CD8-positive, alpha-beta memory T cell (primary cell): ENCODE measurements at regions of chr3 and their contacts with region 1.

Region 1: GRCh38 chr3:187164885-187165543 is 25.7 kb upstream of the RPL39L start:
- DNase-seq: peak in 4 of 5 donors; percentile 18 to 66 (median 52)
- H3K4me3 ChIP-seq: no peak overlapping the region
- H3K4me3 Mint-ChIP-seq: no peak overlapping the region
- H3K27ac ChIP-seq: no peak overlapping the region
- H3K27ac Mint-ChIP-seq: peak overlapping the region in 1 of 8 donors; percentile 77
- H3K4me1 ChIP-seq: peaks cover 3% of the 10 kb centered on the region
- H3K4me1 Mint-ChIP-seq: peaks cover 2 to 3% (median 3%) of the 10 kb centered on the region in 3 donors
- H3K27me3 ChIP-seq: no peaks in the 10 kb centered on the region
- H3K27me3 Mint-ChIP-seq: peaks cover 8 to 13% of the 10 kb centered on the region in 2 donors

Region 2: GRCh38 chr3:187101184-187102072 is 63.6 kb before region 1 on chr3:
- CTCF ChIA-PET with region 1: interaction called, 11 read pairs
- POLR2A ChIA-PET with region 1: no interaction called
- DNase-seq: peak; percentile 27 to 68 (median 40)
- H3K4me3 ChIP-seq: peak overlapping the region; percentile 43
- H3K4me3 Mint-ChIP-seq: peak overlapping the region; percentile 17 to 86 (median 74)
- H3K27ac ChIP-seq: no peak overlapping the region
- H3K27ac Mint-ChIP-seq: peak overlapping the region; percentile 11 to 89 (median 56)
- H3K4me1 ChIP-seq: peaks cover 18% of the 10 kb centered on the region
- H3K4me1 Mint-ChIP-seq: peaks cover 17 to 40% (median 27%) of the 10 kb centered on the region in 3 donors
- H3K27me3 ChIP-seq: no peaks in the 10 kb centered on the region
- H3K27me3 Mint-ChIP-seq: no peaks in the 10 kb centered on the region

Region 3: DNA sequence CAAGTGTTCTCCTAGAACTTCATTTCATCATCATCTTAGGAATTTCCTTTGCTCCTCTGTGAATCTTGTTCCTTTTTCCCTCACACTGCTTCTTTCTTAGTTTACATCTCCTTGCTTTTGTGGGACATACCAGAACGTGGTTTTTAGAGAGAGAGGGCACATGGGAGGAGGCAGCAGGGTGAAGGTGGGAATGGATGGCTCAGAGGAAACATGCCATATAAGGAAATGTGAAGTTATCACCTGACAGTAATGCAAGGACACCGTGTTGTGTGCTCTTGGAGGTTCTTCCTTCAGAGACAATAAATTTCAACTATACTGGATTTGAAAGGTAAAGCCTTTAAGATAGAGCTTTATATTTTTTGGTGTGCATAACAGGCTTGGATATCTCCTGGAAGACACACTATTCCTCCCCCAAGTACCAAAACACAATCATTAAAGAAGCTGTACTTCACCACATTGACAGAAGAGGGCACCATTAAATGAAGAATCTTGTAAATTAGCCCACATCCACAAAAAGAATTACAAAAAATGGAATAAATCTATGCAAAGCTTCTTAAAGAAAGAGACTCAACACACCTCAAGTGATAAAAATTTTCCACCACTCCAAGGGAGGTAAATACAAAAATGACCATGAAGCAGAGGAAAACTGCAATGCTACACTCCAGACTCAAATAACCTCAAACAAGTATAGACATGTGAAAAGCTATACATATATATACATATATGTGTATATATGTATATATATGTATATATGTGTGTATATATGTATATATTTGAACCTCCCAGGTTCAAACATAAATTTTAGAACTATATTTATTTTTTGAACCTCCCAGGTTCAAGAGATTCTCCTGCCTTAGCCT is 51.9 kb before region 1 on chr3:
- CTCF ChIA-PET with region 1: interaction called, 121 read pairs
- POLR2A ChIA-PET with region 1: no interaction called
- DNase-seq: peak in 2 of 5 donors; percentile 24 to 47
- H3K4me3 ChIP-seq: no peak overlapping the region
- H3K4me3 Mint-ChIP-seq: no peak overlapping the region
- H3K27ac ChIP-seq: no peak overlapping the region
- H3K27ac Mint-ChIP-seq: no peak overlapping the region
- H3K4me1 ChIP-seq: no peaks in the 10 kb centered on the region
- H3K4me1 Mint-ChIP-seq: peaks cover 3 to 8% (median 7%) of the 10 kb centered on the region in 3 donors
- H3K27me3 ChIP-seq: no peaks in the 10 kb centered on the region
- H3K27me3 Mint-ChIP-seq: peaks cover 0 to 4% of the 10 kb centered on the region in 2 donors

Region 4: GRCh38 chr3:187125319-187126031 is 39.5 kb before region 1 on chr3:
- CTCF ChIA-PET with region 1: interaction called, 11 read pairs
- POLR2A ChIA-PET with region 1: no interaction called
- DNase-seq: no peak
- H3K4me3 ChIP-seq: no peak overlapping the region
- H3K4me3 Mint-ChIP-seq: peak overlapping the region in 1 of 7 donors; percentile 65
- H3K27ac ChIP-seq: no peak overlapping the region
- H3K27ac Mint-ChIP-seq: no peak overlapping the region
- H3K4me1 ChIP-seq: peaks cover 13% of the 10 kb centered on the region
- H3K4me1 Mint-ChIP-seq: peaks cover 12 to 21% (median 12%) of the 10 kb centered on the region in 3 donors
- H3K27me3 ChIP-seq: no peaks in the 10 kb centered on the region
- H3K27me3 Mint-ChIP-seq: no peaks in the 10 kb centered on the region

Region 5: GRCh38 chr3:187150599-187150998 is 14.4 kb before region 1 on chr3:
- CTCF ChIA-PET with region 1: interaction called, 19 read pairs
- POLR2A ChIA-PET with region 1: no interaction called
- DNase-seq: peak; percentile 47 to 79 (median 56)
- H3K4me3 ChIP-seq: no peak overlapping the region
- H3K4me3 Mint-ChIP-seq: no peak overlapping the region
- H3K27ac ChIP-seq: no peak overlapping the region
- H3K27ac Mint-ChIP-seq: peak overlapping the region in 1 of 8 donors; percentile 54
- H3K4me1 ChIP-seq: no peaks in the 10 kb centered on the region
- H3K4me1 Mint-ChIP-seq: peaks cover 0 to 5% (median 4%) of the 10 kb centered on the region in 3 donors
- H3K27me3 ChIP-seq: no peaks in the 10 kb centered on the region
- H3K27me3 Mint-ChIP-seq: peaks cover 19 to 27% of the 10 kb centered on the region in 2 donors

Region 6: DNA sequence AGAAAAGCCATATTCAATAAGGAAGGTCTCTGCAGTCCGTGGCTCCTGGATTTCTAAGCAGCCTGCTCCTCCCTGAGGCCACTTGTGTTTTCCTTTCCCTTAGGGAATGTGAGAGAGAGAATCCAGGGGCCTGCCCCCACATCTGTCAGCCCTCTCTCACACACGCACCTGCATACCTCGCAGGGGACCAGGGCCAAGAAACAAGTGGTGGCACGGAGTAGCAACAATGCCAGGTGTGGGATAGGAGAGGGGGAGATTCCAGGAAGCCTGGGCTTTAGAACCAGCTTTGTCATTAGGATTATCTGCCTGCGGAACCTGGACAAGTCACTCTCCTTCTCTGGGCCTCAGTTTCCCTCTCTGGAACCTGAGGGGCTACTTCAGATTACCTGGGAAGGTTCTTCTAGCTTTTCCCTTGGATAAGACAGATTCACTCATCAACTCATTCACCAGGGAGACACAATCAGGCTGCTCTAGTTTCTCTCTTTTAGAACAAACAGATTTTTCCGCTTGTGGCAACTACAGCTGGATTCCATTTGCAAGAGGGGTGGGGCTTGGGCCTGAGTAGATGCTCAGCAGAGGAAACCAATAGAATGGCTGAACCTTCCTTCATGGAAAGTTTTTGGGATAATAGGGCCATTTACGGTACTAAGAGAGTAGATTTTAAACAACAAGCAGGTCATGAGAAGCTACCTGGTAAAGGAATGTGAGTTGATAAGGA is 560.8 kb after region 1 on chr3:
- CTCF ChIA-PET with region 1: no interaction called
- POLR2A ChIA-PET with region 1: no interaction called
- DNase-seq: no peak
- H3K4me3 ChIP-seq: no peak overlapping the region
- H3K4me3 Mint-ChIP-seq: no peak overlapping the region
- H3K27ac ChIP-seq: no peak overlapping the region
- H3K27ac Mint-ChIP-seq: peak overlapping the region in 1 of 8 donors; percentile 63
- H3K4me1 ChIP-seq: no peaks in the 10 kb centered on the region
- H3K4me1 Mint-ChIP-seq: no peaks in the 10 kb centered on the region
- H3K27me3 ChIP-seq: no peaks in the 10 kb centered on the region
- H3K27me3 Mint-ChIP-seq: no peaks in the 10 kb centered on the region

Region 7: GRCh38 chr3:188154014-188154808 is 989.2 kb after region 1 on chr3 and contains the start of gene LPP:
- CTCF ChIA-PET with region 1: no interaction called
- POLR2A ChIA-PET with region 1: interaction called, 10 read pairs
- DNase-seq: peak; percentile 74 to 87 (median 81)
- H3K4me3 ChIP-seq: peak within 1 kb of the TSS; percentile 72
- H3K4me3 Mint-ChIP-seq: peak within 1 kb of the TSS; percentile 83 to 95 (median 90)
- H3K27ac ChIP-seq: peak within 1 kb of the TSS; percentile 43
- H3K27ac Mint-ChIP-seq: peak within 1 kb of the TSS; percentile 77 to 96 (median 93)
- H3K4me1 ChIP-seq: peaks cover 25% of the 10 kb centered on the region
- H3K4me1 Mint-ChIP-seq: peaks cover 50 to 70% (median 56%) of the 10 kb centered on the region in 3 donors
- H3K27me3 ChIP-seq: no peaks in the 10 kb centered on the region
- H3K27me3 Mint-ChIP-seq: no peaks in the 10 kb centered on the region
- total RNA-seq, gene LPP: 13.4 to 18.0 TPM